ENCODE measurements at regions of chr18 and their contacts with region 1.

Region 1: GRCh38 chr18:3321133-3321812 is 59.3 kb downstream of the MYL12B start:
- DNase-seq: no peak
- ATAC-seq: no peak
- H3K4me3 Mint-ChIP-seq: no peak overlapping the region
- H3K27ac Mint-ChIP-seq: no peak overlapping the region
- H3K4me1 Mint-ChIP-seq: peaks cover 24% of the 10 kb centered on the region
- H3K27me3 Mint-ChIP-seq: no peaks in the 10 kb centered on the region
- CTCF ChIP-seq: no peak

Region 2: GRCh38 chr18:3380384-3380961 is 59.2 kb after region 1 on chr18:
- CTCF ChIA-PET with region 1: interaction called, 3 read pairs
- POLR2A ChIA-PET with region 1: no interaction called
- intact Hi-C with region 1: loop called (anchors 5 kb)
- DNase-seq: no peak
- ATAC-seq: peak; percentile 66
- H3K4me3 Mint-ChIP-seq: no peak overlapping the region
- H3K27ac Mint-ChIP-seq: no peak overlapping the region
- H3K4me1 Mint-ChIP-seq: peaks cover 21% of the 10 kb centered on the region
- H3K27me3 Mint-ChIP-seq: no peaks in the 10 kb centered on the region
- CTCF ChIP-seq: no peak

Region 3: GRCh38 chr18:3424280-3424890 is 103.1 kb after region 1 on chr18:
- CTCF ChIA-PET with region 1: no interaction called
- POLR2A ChIA-PET with region 1: no interaction called
- intact Hi-C with region 1: no loop called
- DNase-seq: no peak
- ATAC-seq: no peak
- H3K4me3 Mint-ChIP-seq: no peak overlapping the region
- H3K27ac Mint-ChIP-seq: no peak overlapping the region
- H3K4me1 Mint-ChIP-seq: peaks cover 4% of the 10 kb centered on the region
- H3K27me3 Mint-ChIP-seq: no peaks in the 10 kb centered on the region
- CTCF ChIP-seq: no peak